Mammary epithelial cell (primary cell): ENCODE measurements at regions of chr12 and their contacts with region 1.

Region 1: DNA sequence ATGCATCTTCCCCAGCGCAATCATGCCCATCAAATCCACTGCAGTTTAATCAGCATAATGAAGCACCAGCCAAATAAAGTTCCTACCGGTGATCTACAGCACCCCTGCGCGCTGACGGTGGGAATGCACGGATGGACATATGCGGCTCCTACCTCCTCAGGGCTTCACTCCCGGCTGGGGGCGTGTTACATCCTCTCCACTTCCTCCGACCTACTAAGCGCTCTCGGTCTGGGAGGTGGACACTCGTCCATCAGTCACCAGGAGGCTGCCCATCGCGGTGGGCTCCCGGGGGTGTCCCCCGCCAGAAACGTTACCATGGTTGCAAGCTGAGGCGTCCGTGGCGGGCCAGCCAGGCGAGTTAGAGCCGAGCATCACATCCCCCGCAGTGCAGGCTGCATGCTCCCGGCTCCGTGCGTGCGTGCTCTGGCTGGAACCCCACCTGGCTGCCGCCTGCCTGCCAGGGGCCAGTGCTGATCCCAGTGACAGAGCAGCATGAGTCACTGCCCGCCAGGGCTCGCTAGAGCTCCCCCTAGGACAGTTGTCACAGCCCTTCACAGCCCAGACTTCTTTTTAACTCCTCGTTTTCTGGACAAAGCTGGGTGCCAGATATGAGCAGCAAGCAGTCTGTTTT is 73.0 kb downstream of the CIT start:
- DNase-seq: peak; percentile 77
- H3K4me3 ChIP-seq: peak overlapping the region in 2 of 3 experiments; percentile 25
- H3K27ac ChIP-seq: no peak overlapping the region
- H3K4me1 ChIP-seq: peaks cover 23% of the 10 kb centered on the region
- H3K27me3 ChIP-seq: no peaks in the 10 kb centered on the region
- CTCF ChIP-seq: peak; percentile 26 to 75

Region 2: DNA sequence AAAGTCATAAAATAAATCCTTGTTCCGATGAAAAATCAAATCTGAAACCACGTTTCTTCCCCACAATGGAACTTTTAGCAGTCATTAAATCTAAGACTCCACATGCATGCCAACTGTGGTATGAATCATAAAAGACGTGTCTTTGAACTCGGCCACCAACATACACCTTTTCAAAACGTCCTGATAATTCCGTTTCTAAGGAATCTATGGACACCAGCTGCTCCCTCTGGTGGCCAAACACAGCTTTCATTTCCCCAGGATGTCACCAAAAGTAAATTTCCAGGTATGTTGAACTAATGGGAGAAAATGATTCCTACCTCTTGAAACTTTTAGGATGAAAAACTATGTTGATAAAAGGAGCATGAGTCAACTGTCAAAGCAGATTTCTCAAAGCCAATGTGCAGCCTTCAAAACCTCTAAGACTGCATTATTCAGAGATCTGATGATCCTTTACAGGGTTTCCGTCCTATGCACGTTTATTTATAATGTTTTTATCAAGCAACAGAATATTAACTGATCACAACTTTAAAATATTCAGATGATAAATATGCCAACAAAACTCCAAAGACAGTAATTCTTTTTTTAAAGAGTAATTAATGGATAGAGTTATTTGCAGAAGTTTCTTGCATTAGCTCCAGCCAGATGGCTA is 23.2 kb before region 1 on chr12:
- CTCF ChIA-PET with region 1: interaction called, 13 read pairs
- dilution Hi-C with region 1: no loop called
- in situ Hi-C with region 1: no loop called
- intact Hi-C with region 1: no loop called
- DNase-seq: peak; percentile 61
- H3K4me3 ChIP-seq: no peak overlapping the region
- H3K27ac ChIP-seq: no peak overlapping the region
- H3K4me1 ChIP-seq: no peaks in the 10 kb centered on the region
- H3K27me3 ChIP-seq: no peaks in the 10 kb centered on the region
- CTCF ChIP-seq: peak; percentile 83 to 91

Region 3: DNA sequence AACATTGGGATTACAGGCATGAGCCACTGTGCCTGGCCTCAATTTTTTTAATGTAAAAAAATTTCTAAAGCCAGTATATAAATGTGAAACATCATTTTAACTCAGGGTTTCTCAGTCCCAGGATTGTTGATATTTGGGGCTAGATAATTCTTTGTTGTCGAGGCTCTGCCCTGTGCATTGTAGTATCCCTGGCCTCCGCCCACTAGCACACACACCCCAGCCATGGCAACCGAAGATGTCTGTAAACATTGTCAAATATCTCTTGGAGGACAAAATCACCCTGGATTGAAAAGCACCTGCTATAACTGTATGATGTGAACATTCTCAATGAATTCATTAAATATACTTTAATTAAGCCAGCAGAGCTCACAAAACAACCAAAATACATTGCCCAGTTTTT is 81.4 kb after region 1 on chr12:
- CTCF ChIA-PET with region 1: no interaction called
- dilution Hi-C with region 1: no loop called
- in situ Hi-C with region 1: no loop called
- intact Hi-C with region 1: no loop called
- DNase-seq: no peak
- H3K4me3 ChIP-seq: no peak overlapping the region
- H3K27ac ChIP-seq: no peak overlapping the region
- H3K4me1 ChIP-seq: no peaks in the 10 kb centered on the region
- H3K27me3 ChIP-seq: no peaks in the 10 kb centered on the region
- CTCF ChIP-seq: no peak